Stomach (tissue), 19 donors: ENCODE measurements at regions of chr11 and their contacts with region 1.

Region 1: GRCh38 chr11:68903288-68904247 is at the starts of genes IGHMBP2 and MRPL21:
- DNase-seq: peak; percentile 90 to 96
- H3K4me3 ChIP-seq: peak within 1 kb of the TSS; percentile 63 to 95 (median 91)
- H3K27ac ChIP-seq: peak within 1 kb of the TSS; percentile 84 to 93 (median 86)
- H3K4me1 ChIP-seq: peaks cover 23 to 45% (median 37%) of the 10 kb centered on the region in 4 donors
- H3K27me3 ChIP-seq: no peaks in the 10 kb centered on the region
- CTCF ChIP-seq: no peak
- EP300 ChIP-seq: no peak
- POLR2A ChIP-seq: peak in 1 of 4 donors; percentile 35
- total RNA-seq, gene IGHMBP2: 8.8 to 133 (median 25.6) TPM
- total RNA-seq, gene MRPL21: 30.6 to 185 (median 56.7) TPM

Region 2: DNA sequence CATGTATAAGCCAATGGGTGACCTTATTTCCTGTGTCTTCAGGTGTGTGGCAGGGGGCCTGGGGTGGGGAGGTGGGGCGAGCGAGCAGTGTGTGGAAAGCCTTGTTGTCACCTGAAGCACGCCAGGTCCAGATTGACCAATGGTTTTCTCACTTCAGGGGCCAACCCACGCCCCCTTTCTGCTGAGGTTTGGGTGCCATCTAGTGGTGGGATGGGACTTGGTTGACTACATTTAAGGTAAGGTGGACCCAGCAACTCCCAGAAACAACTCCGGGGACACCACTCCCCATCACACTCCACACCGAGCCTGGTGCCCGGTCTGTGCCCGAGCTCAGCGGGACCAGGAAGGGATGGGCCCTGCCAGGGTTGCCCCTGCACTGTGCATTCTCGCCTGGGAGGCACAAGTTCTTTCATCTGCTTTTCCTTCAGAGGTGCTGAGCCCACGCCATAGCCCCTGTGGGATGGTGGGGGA is 185.1 kb after region 1 on chr11:
- intact Hi-C with region 1: loop called (anchors 10 kb)
- DNase-seq: peak; percentile 77 to 93
- H3K4me3 ChIP-seq: no peak overlapping the region
- H3K27ac ChIP-seq: peak overlapping the region in 3 of 5 donors; percentile 15 to 83 (median 25)
- H3K4me1 ChIP-seq: peaks cover 6 to 33% (median 18%) of the 10 kb centered on the region in 4 donors
- H3K27me3 ChIP-seq: no peaks in the 10 kb centered on the region
- CTCF ChIP-seq: peak in 5 of 7 experiments; percentile 36 to 66 (median 59)
- EP300 ChIP-seq: no peak
- POLR2A ChIP-seq: no peak